ENCODE measurements at regions of chr3 and their contacts with region 1.

Region 1: DNA sequence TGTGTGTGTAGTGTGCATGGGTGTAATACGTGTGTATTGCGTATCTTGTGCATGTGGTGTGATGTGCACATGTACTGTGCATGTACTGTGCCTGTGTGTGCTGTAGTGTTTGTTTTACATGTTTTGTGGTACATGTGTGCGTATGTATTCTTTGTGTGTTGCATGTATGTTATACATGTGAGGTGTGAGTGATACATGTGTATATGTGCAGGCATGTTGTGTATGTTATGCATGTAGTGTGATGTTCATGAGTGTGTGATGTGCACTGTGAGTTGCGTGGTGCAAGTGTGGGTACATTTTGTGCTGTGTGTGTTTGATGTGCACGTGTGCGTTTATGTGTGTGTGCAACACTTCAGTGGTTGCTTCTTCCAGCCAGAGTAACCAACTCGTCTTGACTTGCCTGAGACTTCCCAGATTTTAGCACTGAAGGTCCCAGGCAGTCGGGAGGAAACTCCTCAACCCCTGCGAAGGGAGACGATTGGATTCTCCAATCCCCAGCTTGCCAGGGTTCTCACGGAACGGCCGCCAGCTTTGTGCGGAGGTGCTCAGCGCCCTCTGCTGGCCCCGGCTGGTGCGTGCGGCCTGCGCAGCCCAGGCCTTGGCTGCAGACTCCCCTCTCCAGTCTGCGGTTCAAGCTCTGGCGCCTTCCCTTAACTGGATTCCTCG is 3.6 kb downstream of the GALNT15 start:
- DNase-seq: peak in 1 of 2 donors; percentile 88
- H3K4me3 ChIP-seq: peak overlapping the region; percentile 57 to 59
- H3K27ac ChIP-seq: no peak overlapping the region
- H3K4me1 ChIP-seq: peaks cover 0 to 13% of the 10 kb centered on the region in 2 donors
- H3K27me3 ChIP-seq: no peaks in the 10 kb centered on the region
- CTCF ChIP-seq: peak; percentile 94 to 96 (median 95)

Region 2: GRCh38 chr3:15815696-15816095 is 362.4 kb before region 1 on chr3:
- intact Hi-C with region 1: loop called (anchors 2 kb)
- DNase-seq: no peak
- H3K4me3 ChIP-seq: no peak overlapping the region
- H3K27ac ChIP-seq: no peak overlapping the region
- H3K4me1 ChIP-seq: no peaks in the 10 kb centered on the region
- H3K27me3 ChIP-seq: no peaks in the 10 kb centered on the region
- CTCF ChIP-seq: peak; percentile 20 to 49 (median 28)

Region 3: DNA sequence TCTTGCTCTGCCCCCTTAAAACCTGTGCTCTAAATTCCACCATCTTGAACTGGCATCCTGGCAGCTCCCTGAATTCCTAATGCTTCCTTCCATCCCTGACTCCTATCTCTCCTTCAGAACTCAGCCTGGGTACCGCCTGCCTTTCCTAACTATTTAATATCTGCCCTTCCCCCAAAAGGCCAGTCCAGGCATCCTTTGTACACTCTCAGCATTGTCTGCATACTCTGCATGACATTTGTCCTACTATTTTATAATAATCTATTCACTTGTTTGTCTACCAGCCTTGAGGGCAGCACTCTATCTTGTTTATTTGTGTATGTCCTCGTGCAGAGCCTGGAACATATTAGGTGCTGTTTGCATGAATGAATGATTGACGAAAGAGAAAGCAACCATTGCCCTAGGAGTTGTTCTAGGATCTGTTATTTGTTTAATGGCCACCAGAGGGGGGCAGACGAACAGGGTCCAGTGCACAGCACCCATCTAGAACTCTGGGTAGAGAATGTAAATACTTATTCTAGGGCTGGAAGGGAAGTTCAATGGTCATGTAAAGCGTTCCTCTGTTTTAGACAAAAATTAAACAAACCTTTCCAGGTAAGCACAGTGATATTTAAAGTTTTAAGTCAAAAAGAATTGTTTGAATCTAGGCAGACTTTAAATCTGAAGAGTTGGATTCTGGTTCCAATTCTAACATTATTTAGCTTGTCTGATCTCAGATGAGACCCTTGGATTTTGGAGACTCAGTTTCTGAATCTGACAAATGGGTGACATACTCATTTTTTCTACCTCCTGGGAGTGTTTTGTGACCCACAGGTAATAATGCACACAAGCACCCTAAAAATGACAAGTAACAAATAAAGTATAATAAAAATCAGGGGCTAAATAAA is 129.4 kb before region 1 on chr3:
- intact Hi-C with region 1: loop called (anchors 1 kb)
- DNase-seq: no peak
- H3K4me3 ChIP-seq: peak overlapping the region in 1 of 2 donors; percentile 46
- H3K27ac ChIP-seq: no peak overlapping the region
- H3K4me1 ChIP-seq: peaks cover 0 to 3% of the 10 kb centered on the region in 2 donors
- H3K27me3 ChIP-seq: no peaks in the 10 kb centered on the region
- CTCF ChIP-seq: peak; percentile 72 to 85 (median 82)

Region 4: DNA sequence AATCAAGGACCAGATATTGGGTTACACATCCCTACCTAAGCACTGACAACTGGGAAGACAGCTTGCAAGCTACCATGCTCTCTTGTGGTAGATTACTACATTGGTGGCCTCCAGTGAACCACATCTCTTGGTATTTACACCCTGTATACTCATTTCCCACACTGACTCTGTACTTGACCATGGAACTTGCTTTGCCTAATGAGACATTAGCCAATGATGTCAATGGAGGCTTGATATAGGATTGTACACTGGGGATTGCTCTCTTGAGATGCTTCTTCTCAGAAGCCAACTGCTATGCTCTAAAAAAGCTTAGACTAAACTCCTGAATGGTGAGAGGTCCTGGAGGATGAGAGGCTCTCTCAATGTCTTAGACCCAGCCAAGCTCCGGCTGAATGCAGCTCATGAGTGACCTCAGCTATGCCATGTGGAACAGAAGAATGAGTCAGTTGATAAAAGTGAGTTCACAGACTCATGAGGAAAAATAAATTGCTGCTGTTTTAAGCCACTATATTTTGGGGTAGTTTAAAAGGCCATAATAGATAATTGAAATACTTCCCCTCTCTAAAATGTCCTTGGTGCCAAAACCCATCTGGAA is 65.1 kb before region 1 on chr3:
- intact Hi-C with region 1: loop called (anchors 10 kb)
- DNase-seq: no peak
- H3K4me3 ChIP-seq: no peak overlapping the region
- H3K27ac ChIP-seq: peak overlapping the region; percentile 62 to 73
- H3K4me1 ChIP-seq: peaks cover 3 to 4% of the 10 kb centered on the region in 2 donors
- H3K27me3 ChIP-seq: no peaks in the 10 kb centered on the region
- CTCF ChIP-seq: no peak

Region 5: DNA sequence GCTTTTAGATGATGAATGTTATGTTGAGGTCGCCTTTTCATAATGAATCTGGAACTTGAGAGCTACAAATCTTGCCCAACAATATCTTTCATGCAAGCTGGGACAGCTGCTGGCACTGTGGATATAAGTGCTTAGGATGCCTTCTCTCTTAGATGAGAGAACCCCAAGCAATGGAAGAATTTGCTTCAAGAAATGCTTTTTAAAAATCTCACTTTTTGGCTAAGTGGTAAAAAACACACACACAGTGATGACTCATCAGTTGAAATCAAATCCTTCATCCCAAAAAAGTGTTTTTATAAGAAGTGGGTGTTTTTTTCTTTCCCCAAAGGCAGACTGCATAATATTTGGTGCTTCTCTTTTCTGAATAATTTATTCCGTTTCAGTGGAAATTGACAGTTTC is 42.0 kb before region 1 on chr3:
- intact Hi-C with region 1: loop called (anchors 5 kb)
- DNase-seq: no peak
- H3K4me3 ChIP-seq: no peak overlapping the region
- H3K27ac ChIP-seq: peak overlapping the region; percentile 59 to 69
- H3K4me1 ChIP-seq: peaks cover 0 to 27% of the 10 kb centered on the region in 2 donors
- H3K27me3 ChIP-seq: no peaks in the 10 kb centered on the region
- CTCF ChIP-seq: no peak

Region 6: GRCh38 chr3:16211176-16211904 is 33.2 kb after region 1 on chr3:
- intact Hi-C with region 1: no loop called
- DNase-seq: no peak
- H3K4me3 ChIP-seq: no peak overlapping the region
- H3K27ac ChIP-seq: no peak overlapping the region
- H3K4me1 ChIP-seq: no peaks in the 10 kb centered on the region
- H3K27me3 ChIP-seq: no peaks in the 10 kb centered on the region
- CTCF ChIP-seq: no peak

Region 7: DNA sequence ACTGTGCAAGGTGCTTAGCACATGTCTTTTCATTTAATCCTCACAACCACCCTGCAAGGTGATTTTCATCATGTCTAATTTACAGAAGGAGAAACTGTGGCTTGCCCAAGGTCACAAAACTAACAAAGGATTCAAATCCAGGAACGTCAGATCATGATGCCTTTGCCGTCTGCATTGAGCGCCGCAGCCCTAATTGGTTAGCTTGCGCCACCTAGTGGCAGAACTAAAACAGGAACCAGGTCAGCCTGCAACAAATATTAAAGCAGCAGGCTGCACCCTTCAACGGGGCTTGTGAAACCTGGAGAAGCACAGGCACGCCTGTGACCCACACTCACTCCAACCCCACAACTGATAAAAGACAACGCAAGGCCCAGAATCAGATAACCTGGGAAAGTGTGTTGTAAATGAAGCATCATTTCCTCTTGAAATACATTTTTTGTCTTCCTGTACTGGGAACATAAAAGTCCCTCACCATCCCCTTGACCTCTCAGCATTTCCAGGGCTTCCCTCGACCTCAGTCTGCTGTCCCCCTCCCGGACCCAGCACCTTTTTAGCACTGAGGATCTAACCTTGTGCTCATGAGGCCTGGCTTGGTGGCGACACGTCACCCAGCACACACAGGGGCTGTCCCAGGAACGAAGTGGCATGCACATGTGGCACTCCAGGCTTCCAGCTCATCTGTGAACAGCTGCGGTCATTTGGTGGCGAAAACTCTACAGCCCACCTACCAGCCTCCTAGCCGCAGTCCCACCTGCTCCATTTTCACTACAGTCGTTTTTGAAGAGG is 69.4 kb after region 1 on chr3:
- intact Hi-C with region 1: loop called (anchors 1 kb)
- DNase-seq: peak; percentile 20 to 89
- H3K4me3 ChIP-seq: no peak overlapping the region
- H3K27ac ChIP-seq: no peak overlapping the region
- H3K4me1 ChIP-seq: peaks cover 0 to 14% of the 10 kb centered on the region in 2 donors
- H3K27me3 ChIP-seq: no peaks in the 10 kb centered on the region
- CTCF ChIP-seq: peak; percentile 85 to 93 (median 93)

Measured in ascending aorta (tissue), 2 donors.